AG04449 (cell line): ENCODE measurements at regions of chr19 and their contacts with region 1.

Region 1: GRCh38 chr19:2315818-2316353 is 7.9 kb upstream of the LINGO3 start:
- DNase-seq: no peak
- H3K4me3 ChIP-seq: no peak overlapping the region
- CTCF ChIP-seq: peak; percentile 84

Region 2: GRCh38 chr19:2151339-2152229 is 164.3 kb before region 1 on chr19 and contains the start of gene AP3D1:
- CTCF ChIA-PET with region 1: interaction called, 71 read pairs
- POLR2A ChIA-PET with region 1: no interaction called
- DNase-seq: peak; percentile 96
- H3K4me3 ChIP-seq: peak within 1 kb of the TSS; percentile 92
- CTCF ChIP-seq: no peak

Region 3: DNA sequence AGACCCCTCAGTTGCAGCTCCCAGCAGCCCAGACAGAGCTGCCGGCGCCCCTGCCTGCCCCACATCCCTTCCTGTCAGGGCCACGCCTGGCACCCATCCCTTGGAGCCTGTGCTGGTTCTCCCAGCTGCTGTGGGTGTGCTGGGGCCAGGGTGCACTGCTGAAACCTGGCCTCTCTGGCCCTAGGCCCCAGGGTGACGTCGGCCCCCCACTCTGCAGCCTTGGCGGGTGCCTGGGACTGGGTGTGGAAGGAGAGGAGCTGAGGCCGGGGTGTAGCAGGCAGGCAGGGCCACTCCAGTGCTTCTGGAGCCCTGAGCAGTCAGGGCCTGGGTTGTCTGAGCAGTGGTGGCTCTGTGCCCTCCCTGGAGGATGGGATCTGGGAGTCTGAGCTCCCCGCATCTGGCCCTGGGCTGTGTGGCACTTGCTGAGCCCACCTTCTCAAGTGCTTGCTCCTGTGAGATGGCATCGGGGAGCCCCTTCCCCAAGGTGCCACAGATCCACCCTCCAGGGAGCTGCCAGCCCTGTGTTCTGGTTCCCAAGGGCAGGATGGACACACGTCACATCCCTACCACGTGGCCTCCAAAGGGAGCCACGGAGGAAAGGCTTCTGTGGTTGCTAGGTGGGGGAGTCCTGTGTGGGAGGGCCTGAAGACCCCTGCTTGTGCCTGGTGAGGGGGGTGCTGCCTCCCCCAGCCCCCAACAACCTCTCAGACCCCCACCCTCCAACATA is 84.9 kb before region 1 on chr19:
- CTCF ChIA-PET with region 1: interaction called, 16 read pairs
- POLR2A ChIA-PET with region 1: no interaction called
- DNase-seq: no peak
- H3K4me3 ChIP-seq: no peak overlapping the region
- CTCF ChIP-seq: no peak

Region 4: GRCh38 chr19:2289714-2290435 is 26.0 kb before region 1 on chr19:
- CTCF ChIA-PET with region 1: interaction called, 17 read pairs
- POLR2A ChIA-PET with region 1: no interaction called
- DNase-seq: no peak
- H3K4me3 ChIP-seq: no peak overlapping the region; the same call in 1 of the 2 replicates
- CTCF ChIP-seq: no peak

Region 5: DNA sequence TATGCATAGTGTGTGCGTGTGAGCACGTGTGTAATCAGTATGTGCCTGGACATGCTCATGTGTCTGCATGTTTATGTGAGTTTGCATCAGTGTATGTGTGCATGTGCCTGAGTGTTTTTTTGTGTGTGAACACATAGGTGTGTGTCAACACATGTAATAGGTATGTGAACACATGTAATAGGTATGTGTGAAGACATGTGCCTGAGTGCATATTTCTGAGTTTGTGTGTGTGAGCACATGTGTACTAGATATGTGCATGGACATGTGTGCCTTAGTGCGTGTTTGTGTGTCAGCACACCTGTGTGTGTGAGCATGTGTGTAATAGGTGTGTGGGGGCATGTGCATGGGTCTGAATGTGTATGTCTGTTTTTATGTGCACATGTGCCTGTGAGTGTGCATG is 20.0 kb after region 1 on chr19:
- CTCF ChIA-PET with region 1: no interaction called
- POLR2A ChIA-PET with region 1: no interaction called
- DNase-seq: no peak
- H3K4me3 ChIP-seq: no peak overlapping the region
- CTCF ChIP-seq: no peak

Region 6: GRCh38 chr19:2391118-2391725 is 75.3 kb after region 1 on chr19:
- CTCF ChIA-PET with region 1: interaction called, 11 read pairs
- POLR2A ChIA-PET with region 1: no interaction called
- DNase-seq: peak; percentile 19
- H3K4me3 ChIP-seq: no peak overlapping the region
- CTCF ChIP-seq: peak; percentile 69